Activated T-helper 1 cell treated with anti-CD3 and anti-CD28 coated beads, Interleukin-12 subunit alpha, Interleukin-12 subunit beta, Interleukin-2, Interleukin-4 antibody, amounts not matched to agents 30 ng/mL and 10 ng/mL and 1 ng/mL, durations not matched to agents 14 hours and 24 hours and 36 hours (primary cell): ENCODE measurements at regions of chr12 and their contacts with region 1.

Region 1: GRCh38 chr12:121678716-121679580 is 9.5 kb upstream of the MORN3 start:
- DNase-seq: no peak
- H3K4me3 Mint-ChIP-seq: no peak overlapping the region
- H3K27ac Mint-ChIP-seq: no peak overlapping the region
- H3K4me1 Mint-ChIP-seq: peaks cover 5% of the 10 kb centered on the region
- H3K27me3 Mint-ChIP-seq: no peaks in the 10 kb centered on the region

Region 2: DNA sequence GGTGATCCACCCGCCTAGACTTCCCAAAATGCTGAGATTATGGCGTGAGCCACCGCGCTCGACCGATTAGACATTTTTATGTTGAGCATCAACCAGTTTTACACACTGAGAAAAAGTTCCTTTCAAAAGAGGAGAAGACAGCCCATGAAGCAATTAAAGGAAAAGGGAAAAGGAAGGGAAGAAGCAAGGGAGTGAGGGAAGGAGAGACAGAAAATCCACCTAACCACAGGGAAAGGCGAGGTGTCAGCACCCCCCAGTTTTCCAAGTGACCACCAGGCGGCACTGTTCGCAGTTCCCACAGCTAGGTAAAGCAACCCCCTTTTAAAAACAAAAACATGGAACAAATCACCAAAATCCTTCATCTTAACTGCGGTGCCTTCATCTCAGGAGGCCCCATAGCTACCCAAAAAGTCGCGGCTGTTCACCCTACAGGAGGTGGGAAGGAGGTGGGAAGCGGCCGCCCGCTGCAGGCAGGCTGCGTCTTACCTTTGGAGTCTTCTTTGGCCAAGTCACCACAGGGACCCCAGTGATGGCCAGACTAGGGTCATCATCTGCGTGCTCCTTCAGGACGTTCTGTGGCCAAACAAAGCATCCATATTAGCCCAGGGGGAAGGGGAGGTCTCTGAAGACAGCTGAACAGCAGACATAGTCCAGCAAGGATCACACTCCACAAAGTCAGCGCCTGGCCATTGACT is 184.7 kb before region 1 on chr12:
- intact Hi-C with region 1: loop called (anchors 1 kb)
- DNase-seq: peak; percentile 15
- H3K4me3 Mint-ChIP-seq: no peak overlapping the region
- H3K27ac Mint-ChIP-seq: no peak overlapping the region
- H3K4me1 Mint-ChIP-seq: peaks cover 21% of the 10 kb centered on the region
- H3K27me3 Mint-ChIP-seq: no peaks in the 10 kb centered on the region

Region 3: DNA sequence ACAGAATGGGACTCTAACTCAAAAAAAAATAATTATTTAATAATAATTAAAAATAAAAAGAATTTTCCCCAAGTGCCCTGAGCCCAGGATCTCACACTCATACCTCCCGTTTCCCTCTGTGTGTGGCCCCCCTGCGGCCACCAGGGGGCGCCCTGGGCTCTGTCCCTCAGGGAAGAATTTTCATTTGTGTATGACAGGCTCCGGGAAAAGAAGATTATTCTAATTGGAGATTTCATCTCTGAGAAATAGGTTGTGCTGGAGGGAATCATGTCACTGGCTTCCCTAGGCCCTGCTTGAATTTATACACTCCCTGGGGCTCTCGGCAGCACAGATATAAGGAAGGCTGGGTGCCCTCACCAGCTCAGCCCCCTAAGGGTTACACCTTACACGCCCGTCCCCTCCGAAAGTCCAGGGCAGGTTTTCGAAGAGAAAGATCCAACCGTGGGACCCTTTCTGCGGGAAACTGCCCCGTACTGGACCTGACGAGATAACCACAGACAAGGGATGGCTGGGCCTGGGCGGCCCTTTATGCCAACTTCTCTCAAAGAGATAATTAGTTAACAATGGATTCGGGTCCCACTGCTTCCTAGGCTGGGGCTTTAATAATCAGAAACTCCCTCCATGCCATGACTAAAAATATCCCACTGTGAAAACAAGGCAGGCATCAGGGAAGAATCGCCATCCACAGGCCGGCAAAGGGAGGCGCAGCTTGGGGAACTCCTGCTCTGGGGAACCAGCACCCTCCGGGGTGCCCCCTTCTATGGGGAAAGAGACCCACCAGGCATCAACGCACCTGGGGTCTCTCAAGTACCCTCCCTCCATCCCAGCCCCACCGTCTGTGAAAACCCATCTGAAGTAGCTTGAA is 178.8 kb before region 1 on chr12:
- intact Hi-C with region 1: loop called (anchors 1 kb)
- DNase-seq: peak; percentile 55
- H3K4me3 Mint-ChIP-seq: no peak overlapping the region
- H3K27ac Mint-ChIP-seq: no peak overlapping the region
- H3K4me1 Mint-ChIP-seq: peaks cover 12% of the 10 kb centered on the region
- H3K27me3 Mint-ChIP-seq: no peaks in the 10 kb centered on the region

Region 4: DNA sequence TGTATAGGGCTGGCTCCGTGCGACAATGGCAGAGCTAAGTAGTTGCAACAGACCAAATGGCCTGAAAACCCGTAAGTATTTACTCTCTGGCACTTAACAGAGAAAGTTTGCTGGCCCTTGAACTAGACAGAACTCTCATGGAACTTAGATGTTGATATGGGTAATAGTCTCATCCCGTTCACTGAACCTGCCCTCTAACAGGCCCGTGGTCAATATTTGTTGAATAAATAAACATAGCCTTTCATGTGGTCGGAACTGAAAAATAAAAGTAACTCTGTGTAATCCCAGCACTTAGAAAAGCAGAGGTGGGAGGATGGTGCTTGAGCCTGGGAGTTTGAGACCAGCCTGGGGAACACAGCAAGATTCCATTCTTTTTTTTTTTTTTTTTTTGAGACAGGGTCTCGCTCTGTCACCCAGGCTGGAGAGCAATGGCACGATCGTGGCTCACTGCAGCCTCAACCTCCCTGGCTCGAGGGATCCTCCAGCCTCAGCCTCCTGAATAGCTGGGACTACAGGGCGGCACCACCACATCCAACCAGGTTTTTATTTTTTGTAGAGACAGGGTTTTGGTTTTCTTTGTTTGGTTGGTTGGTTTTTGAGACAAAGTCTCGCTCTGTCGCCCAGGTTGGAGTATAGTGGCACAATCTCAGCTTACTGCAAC is 127.8 kb before region 1 on chr12:
- intact Hi-C with region 1: loop called (anchors 1 kb)
- DNase-seq: no peak
- H3K4me3 Mint-ChIP-seq: no peak overlapping the region
- H3K27ac Mint-ChIP-seq: no peak overlapping the region
- H3K4me1 Mint-ChIP-seq: peaks cover 6% of the 10 kb centered on the region
- H3K27me3 Mint-ChIP-seq: no peaks in the 10 kb centered on the region